IMR-90 (cell line): ENCODE measurements at regions of chr2 and their contacts with region 1.

Region 1: GRCh38 chr2:144671695-144672455 is 152.0 kb upstream of the ZEB2 start:
- DNase-seq: peak; percentile 25
- ATAC-seq: no peak
- H3K4me3 ChIP-seq: no peak overlapping the region
- H3K27ac ChIP-seq: no peak overlapping the region
- H3K4me1 ChIP-seq: no peaks in the 10 kb centered on the region
- H3K27me3 ChIP-seq: no peaks in the 10 kb centered on the region
- CTCF ChIP-seq: no peak
- POLR2A ChIP-seq: no peak
- RAD21 ChIP-seq: no peak

Region 2: GRCh38 chr2:143026411-143027054 is 1645.3 kb before region 1 on chr2:
- CTCF ChIA-PET with region 1: no interaction called
- POLR2A ChIA-PET with region 1: no interaction called
- dilution Hi-C with region 1: no loop called
- in situ Hi-C with region 1: no loop called
- intact Hi-C with region 1: no loop called
- DNase-seq: no peak
- ATAC-seq: no peak
- H3K4me3 ChIP-seq: no peak overlapping the region
- H3K27ac ChIP-seq: no peak overlapping the region
- H3K4me1 ChIP-seq: no peaks in the 10 kb centered on the region; the same call in 1 of the 2 replicates
- H3K27me3 ChIP-seq: no peaks in the 10 kb centered on the region
- CTCF ChIP-seq: no peak
- POLR2A ChIP-seq: no peak
- RAD21 ChIP-seq: no peak

Region 3: GRCh38 chr2:144503242-144503641 is 168.6 kb before region 1 on chr2:
- CTCF ChIA-PET with region 1: no interaction called
- POLR2A ChIA-PET with region 1: interaction called, 15 read pairs
- dilution Hi-C with region 1: no loop called
- in situ Hi-C with region 1: no loop called
- intact Hi-C with region 1: no loop called
- DNase-seq: no peak
- ATAC-seq: no peak
- H3K4me3 ChIP-seq: no peak overlapping the region
- H3K27ac ChIP-seq: no peak overlapping the region
- H3K4me1 ChIP-seq: peaks cover 19% of the 10 kb centered on the region
- H3K27me3 ChIP-seq: no peaks in the 10 kb centered on the region
- CTCF ChIP-seq: no peak
- POLR2A ChIP-seq: no peak
- RAD21 ChIP-seq: no peak

Region 4: GRCh38 chr2:145075454-145076062 is 403.7 kb after region 1 on chr2:
- CTCF ChIA-PET with region 1: no interaction called
- POLR2A ChIA-PET with region 1: no interaction called
- dilution Hi-C with region 1: no loop called
- in situ Hi-C with region 1: no loop called
- intact Hi-C with region 1: no loop called
- DNase-seq: no peak
- ATAC-seq: peak; percentile 29; the same call in 1 of the 2 replicates
- H3K4me3 ChIP-seq: no peak overlapping the region
- H3K27ac ChIP-seq: no peak overlapping the region
- H3K4me1 ChIP-seq: no peaks in the 10 kb centered on the region
- H3K27me3 ChIP-seq: no peaks in the 10 kb centered on the region
- CTCF ChIP-seq: no peak
- POLR2A ChIP-seq: no peak
- RAD21 ChIP-seq: no peak